ENCODE measurements at regions of chr12 and their contacts with region 1.

Region 1: GRCh38 chr12:39646963-39647362 is 27.4 kb upstream of the ABCD2 start:
- DNase-seq: no peak
- ATAC-seq: no peak
- H3K4me3 ChIP-seq: no peak overlapping the region
- H3K4me3 Mint-ChIP-seq: no peak overlapping the region
- H3K27ac ChIP-seq: no peak overlapping the region
- H3K27ac Mint-ChIP-seq: no peak overlapping the region
- H3K4me1 ChIP-seq: no peaks in the 10 kb centered on the region
- H3K4me1 Mint-ChIP-seq: peaks cover 21% of the 10 kb centered on the region
- H3K27me3 ChIP-seq: no peaks in the 10 kb centered on the region
- H3K27me3 Mint-ChIP-seq: no peaks in the 10 kb centered on the region
- CTCF ChIP-seq: no peak

Region 2: DNA sequence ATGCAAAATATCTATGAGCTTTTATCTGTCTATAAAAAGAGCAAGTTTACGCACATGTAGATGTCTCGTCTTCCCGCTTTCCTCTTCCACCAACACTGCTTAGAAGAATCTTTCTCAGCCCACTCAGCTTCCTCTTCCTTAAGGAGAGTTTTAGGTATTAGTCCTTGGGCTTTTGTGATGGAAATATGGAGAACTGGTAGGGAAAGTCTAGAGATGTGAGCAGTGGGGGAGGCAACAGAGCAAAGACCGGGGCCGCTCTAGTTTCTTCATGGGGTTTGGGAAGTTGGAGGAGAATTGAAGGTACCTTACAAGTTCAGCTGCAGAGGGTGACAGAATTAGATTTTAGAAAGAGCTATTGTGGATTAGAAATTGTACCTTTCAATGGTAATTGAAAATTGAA is 685.3 kb before region 1 on chr12:
- CTCF ChIA-PET with region 1: no interaction called
- POLR2A ChIA-PET with region 1: no interaction called
- intact Hi-C with region 1: no loop called
- DNase-seq: no peak
- ATAC-seq: no peak
- H3K4me3 ChIP-seq: no peak overlapping the region
- H3K4me3 Mint-ChIP-seq: no peak overlapping the region
- H3K27ac ChIP-seq: no peak overlapping the region
- H3K27ac Mint-ChIP-seq: no peak overlapping the region
- H3K4me1 ChIP-seq: no peaks in the 10 kb centered on the region
- H3K4me1 Mint-ChIP-seq: no peaks in the 10 kb centered on the region
- H3K27me3 ChIP-seq: no peaks in the 10 kb centered on the region
- H3K27me3 Mint-ChIP-seq: no peaks in the 10 kb centered on the region
- CTCF ChIP-seq: no peak

Region 3: DNA sequence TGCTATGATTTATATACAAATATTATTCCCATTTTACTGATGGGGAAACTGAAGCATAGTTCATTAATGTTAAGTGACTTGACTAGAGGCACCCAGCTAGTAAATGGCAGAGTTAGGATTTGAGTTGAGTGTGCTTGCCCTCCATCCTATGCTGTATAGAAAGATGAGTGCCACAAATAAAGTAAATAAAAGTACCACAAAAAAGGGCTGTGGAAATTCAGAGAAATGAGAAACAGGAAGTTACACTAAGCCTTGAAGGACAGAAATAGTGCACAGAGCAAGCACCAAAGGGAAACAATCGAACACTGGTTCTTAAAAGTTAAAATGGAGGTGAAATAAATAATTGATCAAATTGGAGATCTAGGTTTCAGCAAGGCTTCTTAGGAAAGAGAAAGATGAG is 18.1 kb before region 1 on chr12:
- CTCF ChIA-PET with region 1: no interaction called
- POLR2A ChIA-PET with region 1: no interaction called
- intact Hi-C with region 1: loop called in 1 of 2 experiments (anchors 1 kb)
- DNase-seq: peak in 2 of 9 experiments; percentile 42 to 64
- ATAC-seq: peak; percentile 74
- H3K4me3 ChIP-seq: no peak overlapping the region
- H3K4me3 Mint-ChIP-seq: peak overlapping the region; percentile 52
- H3K27ac ChIP-seq: peak overlapping the region in 1 of 2 experiments; percentile 64
- H3K27ac Mint-ChIP-seq: peak overlapping the region; percentile 88
- H3K4me1 ChIP-seq: peaks cover 41% of the 10 kb centered on the region
- H3K4me1 Mint-ChIP-seq: peaks cover 52% of the 10 kb centered on the region
- H3K27me3 ChIP-seq: no peaks in the 10 kb centered on the region
- H3K27me3 Mint-ChIP-seq: no peaks in the 10 kb centered on the region
- CTCF ChIP-seq: no peak

Region 4: GRCh38 chr12:39660101-39660500 is 13.1 kb after region 1 on chr12:
- CTCF ChIA-PET with region 1: no interaction called
- POLR2A ChIA-PET with region 1: no interaction called
- intact Hi-C with region 1: loop called in 1 of 2 experiments (anchors 2 kb)
- DNase-seq: no peak
- ATAC-seq: no peak
- H3K4me3 ChIP-seq: no peak overlapping the region
- H3K4me3 Mint-ChIP-seq: no peak overlapping the region
- H3K27ac ChIP-seq: no peak overlapping the region
- H3K27ac Mint-ChIP-seq: no peak overlapping the region
- H3K4me1 ChIP-seq: no peaks in the 10 kb centered on the region
- H3K4me1 Mint-ChIP-seq: no peaks in the 10 kb centered on the region
- H3K27me3 ChIP-seq: no peaks in the 10 kb centered on the region
- H3K27me3 Mint-ChIP-seq: no peaks in the 10 kb centered on the region
- CTCF ChIP-seq: no peak

Region 5: DNA sequence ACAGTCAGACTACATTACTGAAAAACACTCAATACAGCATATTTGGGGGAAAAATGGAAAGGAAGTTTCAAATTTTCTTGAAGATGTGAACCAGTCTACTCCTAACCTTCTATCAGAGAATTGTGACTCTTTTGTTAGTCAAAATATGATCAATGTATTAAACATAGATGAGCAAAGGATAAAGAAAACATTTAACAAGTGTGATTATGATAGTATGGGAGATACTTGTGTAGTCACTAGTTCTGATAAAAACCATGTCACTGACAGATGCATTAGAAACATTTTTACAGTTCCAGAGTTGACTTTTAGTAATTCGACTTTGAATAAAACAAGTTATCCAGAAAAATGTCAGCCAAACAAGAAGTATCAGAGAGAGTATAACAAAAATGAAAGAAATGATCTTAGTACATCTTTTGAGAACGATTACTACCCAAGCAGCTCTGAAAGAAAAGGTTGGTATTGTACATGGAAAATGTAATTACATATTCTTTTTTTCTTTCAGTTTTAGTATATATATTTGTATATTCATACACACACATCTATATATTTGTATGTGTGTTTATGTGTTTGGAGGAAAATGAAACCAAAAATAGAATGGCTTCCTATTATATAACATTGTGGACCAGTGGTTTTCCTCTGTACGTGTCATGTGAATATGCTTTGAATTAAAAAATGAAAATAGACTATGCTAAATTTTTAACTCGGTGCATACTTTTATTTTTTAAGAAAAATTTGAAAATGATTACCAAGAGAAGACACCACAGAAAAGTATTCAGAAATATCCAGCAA is 35.9 kb after region 1 on chr12:
- CTCF ChIA-PET with region 1: no interaction called
- POLR2A ChIA-PET with region 1: no interaction called
- intact Hi-C with region 1: loop called in 1 of 2 experiments (anchors 5 kb)
- DNase-seq: peak in 2 of 9 experiments; percentile 52 to 75
- ATAC-seq: peak; percentile 88
- H3K4me3 ChIP-seq: peak overlapping the region; percentile 24 to 44
- H3K4me3 Mint-ChIP-seq: peak overlapping the region; percentile 88
- H3K27ac ChIP-seq: peak overlapping the region; percentile 57 to 86
- H3K27ac Mint-ChIP-seq: peak overlapping the region; percentile 98
- H3K4me1 ChIP-seq: peaks cover 23% of the 10 kb centered on the region
- H3K4me1 Mint-ChIP-seq: peaks cover 29% of the 10 kb centered on the region
- H3K27me3 ChIP-seq: no peaks in the 10 kb centered on the region
- H3K27me3 Mint-ChIP-seq: no peaks in the 10 kb centered on the region
- CTCF ChIP-seq: no peak